ENCODE measurements at regions of chr16 and their contacts with region 1.

Region 1: GRCh38 chr16:80540516-80541272 is at the start of gene DYNLRB2:
- DNase-seq: peak; percentile 95
- ATAC-seq: peak; percentile 91
- H3K4me3 Mint-ChIP-seq: peak within 1 kb of the TSS; percentile 97
- H3K27ac Mint-ChIP-seq: peak within 1 kb of the TSS; percentile 99
- H3K4me1 Mint-ChIP-seq: peaks cover 28% of the 10 kb centered on the region
- H3K27me3 Mint-ChIP-seq: peaks cover 4% of the 10 kb centered on the region
- total RNA-seq, gene DYNLRB2: not detected

Region 2: GRCh38 chr16:80488167-80488566 is 52.5 kb before region 1 on chr16:
- CTCF ChIA-PET with region 1: no interaction called
- POLR2A ChIA-PET with region 1: no interaction called
- intact Hi-C with region 1: no loop called
- DNase-seq: no peak
- ATAC-seq: no peak
- H3K4me3 Mint-ChIP-seq: no peak overlapping the region
- H3K27ac Mint-ChIP-seq: no peak overlapping the region
- H3K4me1 Mint-ChIP-seq: peaks cover 2% of the 10 kb centered on the region
- H3K27me3 Mint-ChIP-seq: peaks cover 23% of the 10 kb centered on the region

Region 3: GRCh38 chr16:80569440-80570105 is 28.9 kb after region 1 on chr16:
- CTCF ChIA-PET with region 1: no interaction called
- POLR2A ChIA-PET with region 1: no interaction called
- intact Hi-C with region 1: loop called in 1 of 2 experiments (anchors 1 kb)
- DNase-seq: peak; percentile 90
- ATAC-seq: peak; percentile 98
- H3K4me3 Mint-ChIP-seq: peak overlapping the region; percentile 5
- H3K27ac Mint-ChIP-seq: peak overlapping the region; percentile 81
- H3K4me1 Mint-ChIP-seq: peaks cover 38% of the 10 kb centered on the region
- H3K27me3 Mint-ChIP-seq: peaks cover 4% of the 10 kb centered on the region

Region 4: DNA sequence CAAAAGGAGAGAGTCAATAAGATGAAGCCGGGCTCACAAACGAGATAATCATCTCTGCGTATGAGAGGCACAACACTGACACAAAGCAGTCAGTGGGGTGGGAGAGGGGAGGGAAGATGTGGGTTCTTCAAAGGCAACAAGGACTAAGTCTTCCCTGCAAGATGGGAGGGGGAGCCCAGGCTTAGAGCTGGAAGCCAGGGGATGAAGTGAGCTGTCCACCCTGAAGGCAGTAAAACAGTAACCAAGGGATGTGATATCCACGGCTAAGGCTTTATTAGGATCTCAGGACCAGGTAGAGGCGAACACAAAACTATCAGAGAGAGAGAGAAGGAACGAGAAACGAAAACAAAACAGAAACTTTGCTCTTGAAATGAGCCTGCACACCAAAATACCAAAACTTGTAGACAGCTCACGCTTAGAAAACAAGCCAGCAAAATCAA is 116.0 kb after region 1 on chr16:
- CTCF ChIA-PET with region 1: no interaction called
- POLR2A ChIA-PET with region 1: no interaction called
- intact Hi-C with region 1: loop called in 1 of 2 experiments (anchors 1 kb)
- DNase-seq: peak; percentile 57
- ATAC-seq: peak; percentile 92
- H3K4me3 Mint-ChIP-seq: peak overlapping the region; percentile 77
- H3K27ac Mint-ChIP-seq: peak overlapping the region; percentile 87
- H3K4me1 Mint-ChIP-seq: peaks cover 27% of the 10 kb centered on the region
- H3K27me3 Mint-ChIP-seq: no peaks in the 10 kb centered on the region

Region 5: GRCh38 chr16:80804056-80804450 is 263.4 kb after region 1 on chr16:
- CTCF ChIA-PET with region 1: no interaction called
- POLR2A ChIA-PET with region 1: no interaction called
- intact Hi-C with region 1: loop called (anchors 1 to 2 kb)
- DNase-seq: peak; percentile 81
- ATAC-seq: peak; percentile 48
- H3K4me3 Mint-ChIP-seq: peak overlapping the region; percentile 84
- H3K27ac Mint-ChIP-seq: peak overlapping the region; percentile 89
- H3K4me1 Mint-ChIP-seq: peaks cover 32% of the 10 kb centered on the region
- H3K27me3 Mint-ChIP-seq: no peaks in the 10 kb centered on the region

Region 6: DNA sequence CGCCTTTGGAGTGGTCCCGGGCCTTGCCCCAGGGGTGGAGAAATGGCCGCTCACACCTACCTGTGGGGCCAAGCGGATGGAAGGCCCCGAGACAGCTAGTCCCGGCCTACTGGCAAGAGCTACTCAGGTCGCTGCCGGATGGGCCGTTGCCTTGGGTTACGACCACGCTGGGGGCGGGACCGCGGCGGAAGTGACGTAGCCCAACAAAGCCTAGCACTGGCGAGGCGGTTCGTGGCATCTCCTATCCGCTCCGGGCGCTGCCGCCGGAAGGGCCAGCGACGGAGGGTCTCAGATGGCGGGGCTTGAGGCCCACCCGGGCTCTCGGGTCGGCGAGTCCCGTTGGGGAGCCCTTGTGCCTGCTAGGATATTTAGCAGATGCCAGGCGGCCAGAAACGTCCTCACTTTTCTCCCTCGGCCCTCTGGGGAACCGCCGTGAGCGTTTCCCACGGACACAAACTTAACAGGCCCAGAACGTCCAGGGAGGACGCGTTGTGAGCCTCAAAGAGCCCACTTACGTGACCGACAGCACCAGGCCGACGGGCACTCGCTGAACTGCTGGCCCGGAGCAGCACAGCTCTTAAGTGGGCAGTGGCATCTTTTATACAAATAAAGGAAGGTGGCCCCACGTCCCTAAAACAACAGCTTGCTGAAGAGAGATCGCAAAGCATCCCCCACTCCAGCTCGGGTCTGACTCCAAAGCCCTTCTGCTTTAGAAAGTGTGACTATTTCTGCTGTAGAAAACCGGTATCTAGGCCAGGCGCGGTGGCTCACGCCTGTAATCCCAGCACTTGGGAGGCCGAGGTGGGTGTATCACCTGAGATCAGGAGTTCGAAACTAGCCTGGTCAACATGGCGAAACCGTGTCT is 536.6 kb after region 1 on chr16 and contains the start of gene C16orf46:
- CTCF ChIA-PET with region 1: no interaction called
- POLR2A ChIA-PET with region 1: no interaction called
- intact Hi-C with region 1: loop called in 1 of 2 experiments (anchors 2 kb)
- DNase-seq: peak; percentile 99
- ATAC-seq: peak; percentile 86
- H3K4me3 Mint-ChIP-seq: no peak within 1 kb of the TSS
- H3K27ac Mint-ChIP-seq: peak within 1 kb of the TSS; percentile 84
- H3K4me1 Mint-ChIP-seq: peaks cover 7% of the 10 kb centered on the region
- H3K27me3 Mint-ChIP-seq: no peaks in the 10 kb centered on the region
- total RNA-seq, gene C16orf46: 0.28 to 0.34 TPM

Region 7: DNA sequence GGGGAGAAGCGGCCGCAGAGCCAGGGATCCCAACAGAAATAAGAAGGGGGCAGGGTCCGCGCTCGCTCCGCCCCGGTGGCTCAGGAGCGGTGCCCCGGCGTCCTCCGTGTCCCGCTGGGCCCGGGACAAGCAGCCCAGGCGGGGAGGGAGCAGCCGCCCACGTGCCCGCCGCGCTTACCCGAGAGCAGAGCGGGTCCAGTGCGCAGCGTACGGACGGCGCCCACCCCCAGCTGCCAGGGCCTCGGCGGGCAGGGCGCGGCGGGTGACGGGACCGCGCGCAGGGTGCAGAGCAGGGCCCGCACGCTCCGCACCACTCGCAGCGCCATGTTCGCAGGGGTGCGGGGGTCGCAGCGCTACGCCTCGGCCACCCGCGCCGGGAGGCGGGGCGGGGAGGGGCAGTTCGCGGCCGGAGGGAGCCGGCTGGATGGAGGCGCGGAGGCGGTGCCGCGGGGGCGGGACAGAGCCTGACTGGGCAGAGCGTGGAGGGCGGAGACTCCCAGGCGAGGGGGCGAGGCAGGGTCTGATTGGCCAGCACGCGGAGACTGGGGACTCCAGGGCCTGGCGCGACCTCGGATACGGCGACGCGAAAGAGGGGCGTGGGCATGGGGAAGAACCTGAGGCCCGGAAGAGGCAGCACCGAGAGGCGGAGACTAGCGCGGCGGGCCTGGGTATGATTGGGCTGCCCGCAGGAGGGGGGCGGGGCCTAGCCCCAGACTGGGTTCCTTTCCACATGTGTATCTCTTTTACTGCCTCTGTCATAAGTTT is 555.4 kb after region 1 on chr16 and contains the start of gene GCSH:
- CTCF ChIA-PET with region 1: no interaction called
- POLR2A ChIA-PET with region 1: no interaction called
- intact Hi-C with region 1: loop called in 1 of 2 experiments (anchors 2 kb)
- DNase-seq: peak; percentile 99
- ATAC-seq: peak; percentile 99
- H3K4me3 Mint-ChIP-seq: peak within 1 kb of the TSS; percentile 72
- H3K27ac Mint-ChIP-seq: peak within 1 kb of the TSS; percentile 78
- H3K4me1 Mint-ChIP-seq: peaks cover 16% of the 10 kb centered on the region
- H3K27me3 Mint-ChIP-seq: no peaks in the 10 kb centered on the region
- total RNA-seq, gene GCSH: 22.2 to 24.9 TPM